ENCODE measurements at regions of chr9 and their contacts with region 1.

Region 1: DNA sequence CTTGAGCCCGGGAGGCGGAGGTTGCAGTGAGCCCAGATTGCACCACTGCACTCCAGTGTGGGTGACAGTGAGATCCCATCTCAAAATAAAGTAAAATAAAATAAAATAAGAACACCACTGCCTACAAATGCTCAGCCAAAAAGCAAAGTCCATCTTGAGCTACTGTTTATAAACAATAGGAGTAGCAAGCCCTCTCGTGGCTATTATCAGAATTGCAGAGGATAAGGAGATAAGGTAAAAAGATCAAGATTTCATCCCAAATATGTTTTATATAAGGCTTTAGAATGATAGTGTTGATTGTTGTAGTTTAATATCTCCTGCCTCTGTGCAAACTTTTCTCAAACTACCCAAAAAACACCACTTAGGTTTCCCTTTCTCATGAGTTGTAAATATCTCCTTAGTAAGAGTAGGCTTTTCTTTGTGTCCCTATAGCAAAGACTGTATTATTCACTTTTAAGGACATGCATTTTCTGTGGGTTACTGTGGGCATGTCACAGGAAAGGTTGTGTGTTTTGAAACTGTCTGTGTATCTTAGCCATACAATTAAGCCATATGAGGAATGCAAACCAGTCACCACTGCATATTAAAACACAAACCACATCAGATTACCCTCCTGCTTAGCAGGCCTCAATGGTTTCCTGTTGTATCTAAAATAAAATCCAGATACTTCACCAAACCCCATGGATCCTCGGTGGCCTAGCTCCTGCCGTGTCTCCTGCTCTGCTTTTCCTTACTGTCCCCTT is 31.8 kb upstream of the CKS2 start:
- DNase-seq: peak; percentile 55
- CTCF ChIP-seq: peak; percentile 33

Region 2: DNA sequence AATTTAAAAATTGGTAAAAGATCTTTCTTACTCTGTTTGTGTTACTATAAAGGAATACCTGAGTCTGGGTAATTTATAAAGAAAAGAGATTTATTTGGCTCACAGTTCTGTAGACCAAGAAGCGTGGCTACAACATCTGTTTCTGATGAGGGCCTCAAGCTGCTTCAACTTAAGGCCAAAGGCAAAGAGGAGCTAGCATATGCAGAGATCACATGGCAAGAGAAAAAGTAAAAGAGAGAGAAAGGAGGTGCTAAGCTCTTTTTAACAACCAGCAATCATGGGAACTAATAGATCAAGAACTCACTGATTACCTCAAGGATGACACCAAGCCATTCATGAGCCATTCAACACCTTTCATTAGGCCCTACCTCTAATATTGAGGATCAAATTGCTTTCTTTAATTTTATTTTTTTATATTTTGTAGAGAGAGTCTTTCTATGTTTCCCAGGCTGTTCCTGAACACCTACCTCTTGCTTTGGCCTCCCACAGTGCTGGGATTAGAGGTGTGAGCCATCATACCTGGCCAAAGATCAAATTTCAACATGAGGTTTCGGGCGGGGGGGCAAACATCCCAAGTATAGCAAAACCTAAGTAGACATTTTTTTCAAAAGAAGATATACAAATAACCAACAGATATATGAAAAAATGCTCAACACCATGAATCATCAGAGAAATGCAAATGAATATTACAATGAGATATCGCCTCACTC is 84.6 kb before region 1 on chr9:
- in situ Hi-C with region 1: loop called (anchors 10 kb)
- DNase-seq: no peak
- CTCF ChIP-seq: no peak

Region 3: DNA sequence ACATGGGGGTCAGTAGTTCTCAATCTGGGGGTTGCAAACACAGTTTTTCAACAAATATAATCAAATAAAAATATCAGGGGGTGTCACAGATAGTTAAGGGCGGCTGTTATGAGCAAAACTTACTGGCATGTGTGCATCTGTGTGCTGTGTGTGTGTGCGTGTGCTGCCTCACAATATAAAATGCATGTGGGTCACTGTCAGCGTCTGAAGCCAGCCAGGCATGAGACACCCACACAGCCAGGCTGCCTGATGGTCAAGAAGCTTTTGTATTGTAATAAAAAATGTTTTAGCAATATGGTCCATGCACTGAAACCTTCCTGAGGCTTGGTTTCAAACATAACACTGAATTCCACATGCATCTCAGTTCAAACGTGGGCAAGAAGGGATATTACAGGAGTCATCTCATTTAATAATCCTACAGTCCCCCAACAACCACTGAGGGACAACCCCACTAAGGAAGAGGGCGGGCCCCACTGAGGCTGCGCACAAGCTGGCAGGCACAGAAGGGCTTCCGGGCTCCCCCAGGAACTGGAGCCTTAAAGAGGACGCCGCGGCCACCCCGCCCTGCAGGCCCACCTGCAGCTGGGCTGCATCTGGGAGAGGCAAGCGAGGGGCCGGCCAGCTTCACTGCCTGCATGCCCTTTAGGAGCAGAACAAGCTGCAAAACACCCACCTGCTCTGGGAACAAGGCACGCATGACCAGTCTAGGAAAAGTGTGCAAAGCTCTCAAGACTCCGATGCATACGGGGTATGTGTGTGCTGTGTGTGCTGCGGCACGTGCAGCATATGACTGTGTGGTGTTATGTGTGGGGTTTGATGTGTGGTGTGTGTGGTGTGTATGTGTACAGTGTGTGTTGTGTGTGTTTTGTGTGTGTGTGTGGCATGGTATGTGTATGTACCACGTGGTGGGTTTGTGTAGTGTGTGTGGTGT is 204.7 kb after region 1 on chr9:
- in situ Hi-C with region 1: no loop called
- DNase-seq: peak; percentile 87
- CTCF ChIP-seq: no peak

Measured in GM13976 (cell line).